ENCODE measurements at regions of chr1 and their contacts with region 1.

Region 1: GRCh38 chr1:201559679-201560162 is 20.8 kb downstream of the NAV1 start:
- DNase-seq: peak; percentile 79
- H3K4me3 Mint-ChIP-seq: no peak overlapping the region
- H3K27ac Mint-ChIP-seq: no peak overlapping the region
- H3K4me1 Mint-ChIP-seq: peaks cover 6% of the 10 kb centered on the region
- H3K27me3 Mint-ChIP-seq: peaks cover 20% of the 10 kb centered on the region

Region 2: GRCh38 chr1:201536543-201536942 is 23.2 kb before region 1 on chr1:
- CTCF ChIA-PET with region 1: interaction called, 11 read pairs
- DNase-seq: no peak
- H3K4me3 Mint-ChIP-seq: no peak overlapping the region
- H3K27ac Mint-ChIP-seq: no peak overlapping the region
- H3K4me1 Mint-ChIP-seq: peaks cover 23% of the 10 kb centered on the region
- H3K27me3 Mint-ChIP-seq: peaks cover 61% of the 10 kb centered on the region

Region 3: DNA sequence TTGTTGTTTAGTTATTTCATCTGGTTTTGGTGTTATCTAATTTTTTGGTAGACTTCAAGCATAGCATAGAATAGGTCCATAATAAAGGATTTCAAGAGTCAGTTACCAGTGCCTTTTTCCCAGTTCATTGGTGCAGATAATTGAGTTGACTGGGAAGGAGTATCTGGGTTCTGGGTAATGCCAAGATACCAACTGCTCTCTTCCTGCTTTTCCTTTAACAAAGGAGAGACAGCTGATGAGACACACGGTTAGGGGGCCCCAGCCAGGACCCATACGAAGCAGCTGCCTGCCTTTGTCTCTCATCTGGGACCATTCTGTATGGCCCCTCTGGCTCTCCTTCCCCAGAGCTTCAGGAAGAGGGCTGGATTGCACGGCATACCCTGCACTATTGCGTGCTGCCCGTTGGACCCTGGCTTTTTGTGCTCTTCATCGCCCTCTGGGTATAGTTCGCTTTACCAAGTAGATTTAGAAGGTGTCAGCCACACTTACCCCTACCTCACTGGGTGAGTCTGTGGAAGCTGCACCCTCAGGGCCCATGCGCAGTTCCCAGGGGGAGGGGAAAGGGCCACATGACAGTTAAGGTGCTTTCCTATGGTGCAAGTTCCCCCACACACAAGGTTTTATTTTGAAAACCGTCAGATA is 13.7 kb before region 1 on chr1:
- CTCF ChIA-PET with region 1: interaction called, 12 read pairs
- DNase-seq: no peak
- H3K4me3 Mint-ChIP-seq: no peak overlapping the region
- H3K27ac Mint-ChIP-seq: no peak overlapping the region
- H3K4me1 Mint-ChIP-seq: no peaks in the 10 kb centered on the region
- H3K27me3 Mint-ChIP-seq: peaks cover 30% of the 10 kb centered on the region

Region 4: DNA sequence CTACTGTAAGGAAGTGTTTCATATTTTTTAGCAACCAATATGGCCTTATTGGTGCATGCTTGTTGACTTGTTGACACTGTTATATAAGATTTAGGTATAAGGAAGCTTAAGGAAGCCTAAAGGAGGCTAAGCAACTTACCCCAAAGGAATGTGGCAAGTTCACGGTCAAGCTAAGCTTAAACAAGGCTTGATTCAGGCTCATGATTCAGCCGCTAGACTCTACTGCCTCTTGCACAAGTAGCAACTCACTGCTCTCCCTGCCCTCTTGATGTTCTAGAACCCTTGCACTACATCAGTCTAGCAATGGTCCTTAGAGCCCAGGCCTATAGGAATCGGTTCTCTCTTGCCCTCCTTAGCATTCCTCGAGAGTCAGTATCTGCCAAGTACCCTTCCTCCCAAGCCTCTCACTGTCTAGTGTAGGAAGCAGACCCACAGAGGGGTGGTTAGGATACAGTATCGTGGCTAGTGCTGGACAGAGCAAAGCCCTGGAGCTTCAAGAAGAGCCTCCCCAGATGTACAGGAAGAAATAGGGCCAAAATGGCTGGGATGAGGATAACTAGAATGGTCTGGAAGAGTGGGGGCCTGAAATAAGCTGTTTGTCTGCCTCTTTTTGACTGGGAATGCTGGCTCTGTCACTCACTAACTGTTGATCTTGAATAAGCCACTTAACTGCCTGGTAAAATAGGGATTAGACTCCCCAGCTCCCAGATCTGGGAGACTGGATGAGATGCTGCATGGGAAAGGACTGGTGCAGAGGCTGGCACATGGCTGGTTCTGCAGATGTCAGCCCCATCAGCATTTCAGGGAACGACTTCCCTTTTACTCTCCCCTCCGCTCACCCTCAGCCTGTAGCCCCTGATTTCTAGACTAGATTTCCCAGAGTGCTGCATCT is 101.5 kb after region 1 on chr1:
- CTCF ChIA-PET with region 1: no interaction called
- DNase-seq: no peak
- H3K4me3 Mint-ChIP-seq: no peak overlapping the region
- H3K27ac Mint-ChIP-seq: no peak overlapping the region
- H3K4me1 Mint-ChIP-seq: no peaks in the 10 kb centered on the region
- H3K27me3 Mint-ChIP-seq: peaks cover 10% of the 10 kb centered on the region

Region 5: DNA sequence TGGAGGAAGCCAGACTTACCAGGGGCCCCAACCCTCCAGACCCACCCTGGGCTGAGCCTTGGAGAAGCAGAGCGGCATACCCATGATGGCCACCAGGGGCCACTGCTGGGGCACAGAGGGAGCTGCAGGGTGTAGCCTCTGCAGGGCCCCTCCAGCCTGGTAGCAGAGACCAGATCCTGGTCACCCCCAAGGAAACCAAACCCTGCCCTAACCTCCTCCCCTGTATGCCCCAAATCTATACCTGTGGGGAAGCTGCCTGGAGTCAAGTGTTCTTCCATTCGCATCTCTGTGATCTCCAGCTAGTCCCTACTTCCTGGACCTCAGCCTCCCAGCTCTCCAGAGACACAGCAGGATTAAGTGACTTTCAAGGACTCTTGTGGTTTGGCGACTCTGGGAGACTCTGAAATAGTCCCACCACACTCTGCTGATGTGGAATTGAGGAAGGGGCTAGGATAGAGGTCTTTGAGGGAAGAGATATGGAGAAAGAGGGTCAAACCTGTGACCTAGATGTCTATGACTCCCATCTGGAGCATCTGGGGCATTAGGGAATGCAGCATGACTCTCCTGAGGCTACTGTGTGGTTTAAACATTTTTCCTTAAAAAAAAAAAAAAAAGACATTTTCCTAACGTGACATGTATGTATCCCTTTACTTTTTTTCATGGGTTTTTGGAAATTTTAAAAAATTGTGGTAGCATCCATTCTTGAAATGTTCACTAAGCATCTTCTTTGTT is 150.0 kb after region 1 on chr1:
- CTCF ChIA-PET with region 1: interaction called, 145 read pairs
- DNase-seq: peak; percentile 69
- H3K4me3 Mint-ChIP-seq: no peak overlapping the region
- H3K27ac Mint-ChIP-seq: no peak overlapping the region
- H3K4me1 Mint-ChIP-seq: no peaks in the 10 kb centered on the region
- H3K27me3 Mint-ChIP-seq: peaks cover 23% of the 10 kb centered on the region

Region 6: GRCh38 chr1:201792534-201793305 is 233.0 kb after region 1 on chr1:
- CTCF ChIA-PET with region 1: interaction called, 61 read pairs
- DNase-seq: peak; percentile 64
- H3K4me3 Mint-ChIP-seq: no peak overlapping the region
- H3K27ac Mint-ChIP-seq: no peak overlapping the region
- H3K4me1 Mint-ChIP-seq: peaks cover 24% of the 10 kb centered on the region
- H3K27me3 Mint-ChIP-seq: peaks cover 11% of the 10 kb centered on the region